ENCODE measurements at regions of chr16 and their contacts with region 1.

Region 1: DNA sequence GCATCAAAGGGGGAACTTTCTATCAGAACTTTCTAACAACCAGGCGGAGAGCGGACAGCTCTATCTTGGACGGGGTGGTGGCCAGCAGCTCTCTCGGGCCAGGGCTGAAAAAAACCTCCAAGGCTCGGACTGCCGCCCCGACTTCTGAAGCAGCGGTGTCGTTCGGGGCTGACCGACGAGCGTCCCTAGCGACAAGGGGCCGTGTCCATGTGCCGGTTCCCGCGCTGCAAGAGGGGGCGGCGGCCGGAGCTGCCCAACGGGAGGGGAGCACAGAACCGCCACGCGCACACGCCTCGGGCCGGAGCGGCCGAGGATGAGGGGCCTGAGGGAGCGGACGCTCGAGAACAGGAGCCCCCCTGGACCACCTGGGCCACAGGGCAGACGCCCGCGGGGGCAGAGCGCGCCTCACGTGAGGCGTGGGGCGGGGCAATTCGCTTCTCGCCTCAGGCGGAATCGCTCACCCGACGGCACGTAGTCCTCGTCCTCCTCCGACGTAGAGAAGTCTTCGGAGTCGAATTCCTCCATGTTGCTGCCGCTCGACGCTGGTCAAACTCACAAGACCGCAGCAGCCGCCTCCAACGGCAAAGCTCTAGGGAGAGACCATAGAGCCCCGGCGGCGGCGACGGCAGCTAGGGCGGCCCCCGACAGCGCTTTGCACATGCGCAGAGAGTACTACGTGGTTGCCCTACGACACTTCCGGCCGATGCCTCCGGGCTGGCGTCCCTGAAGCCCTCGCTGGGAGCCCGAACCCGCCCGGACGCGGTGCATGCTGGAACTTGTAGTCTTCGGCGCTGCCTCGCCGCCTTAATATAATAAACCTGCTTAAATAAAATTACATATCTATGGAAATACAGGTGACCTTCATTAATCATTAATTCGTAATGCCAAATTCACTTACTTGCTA is at the start of gene CFDP1:
- DNase-seq: peak; percentile 91
- ATAC-seq: peak; percentile 86
- H3K4me3 Mint-ChIP-seq: peak within 1 kb of the TSS; percentile 91
- H3K27ac Mint-ChIP-seq: peak within 1 kb of the TSS; percentile 88
- H3K4me1 Mint-ChIP-seq: peaks cover 19% of the 10 kb centered on the region
- H3K27me3 Mint-ChIP-seq: no peaks in the 10 kb centered on the region
- CTCF ChIP-seq: no peak
- total RNA-seq, gene CFDP1: 27.7 and 32.0 TPM in 2 replicates

Region 2: GRCh38 chr16:74606521-74607310 is 826.4 kb before region 1 on chr16 and contains the start of gene GLG1:
- CTCF ChIA-PET with region 1: no interaction called
- POLR2A ChIA-PET with region 1: no interaction called
- intact Hi-C with region 1: loop called (anchors 10 kb)
- DNase-seq: peak; percentile 94
- ATAC-seq: peak; percentile 96
- H3K4me3 Mint-ChIP-seq: peak within 1 kb of the TSS; percentile 94
- H3K27ac Mint-ChIP-seq: peak within 1 kb of the TSS; percentile 91
- H3K4me1 Mint-ChIP-seq: peaks cover 45% of the 10 kb centered on the region
- H3K27me3 Mint-ChIP-seq: no peaks in the 10 kb centered on the region
- CTCF ChIP-seq: no peak
- total RNA-seq, gene GLG1: 72.7 and 81.4 TPM in 2 replicates

Region 3: DNA sequence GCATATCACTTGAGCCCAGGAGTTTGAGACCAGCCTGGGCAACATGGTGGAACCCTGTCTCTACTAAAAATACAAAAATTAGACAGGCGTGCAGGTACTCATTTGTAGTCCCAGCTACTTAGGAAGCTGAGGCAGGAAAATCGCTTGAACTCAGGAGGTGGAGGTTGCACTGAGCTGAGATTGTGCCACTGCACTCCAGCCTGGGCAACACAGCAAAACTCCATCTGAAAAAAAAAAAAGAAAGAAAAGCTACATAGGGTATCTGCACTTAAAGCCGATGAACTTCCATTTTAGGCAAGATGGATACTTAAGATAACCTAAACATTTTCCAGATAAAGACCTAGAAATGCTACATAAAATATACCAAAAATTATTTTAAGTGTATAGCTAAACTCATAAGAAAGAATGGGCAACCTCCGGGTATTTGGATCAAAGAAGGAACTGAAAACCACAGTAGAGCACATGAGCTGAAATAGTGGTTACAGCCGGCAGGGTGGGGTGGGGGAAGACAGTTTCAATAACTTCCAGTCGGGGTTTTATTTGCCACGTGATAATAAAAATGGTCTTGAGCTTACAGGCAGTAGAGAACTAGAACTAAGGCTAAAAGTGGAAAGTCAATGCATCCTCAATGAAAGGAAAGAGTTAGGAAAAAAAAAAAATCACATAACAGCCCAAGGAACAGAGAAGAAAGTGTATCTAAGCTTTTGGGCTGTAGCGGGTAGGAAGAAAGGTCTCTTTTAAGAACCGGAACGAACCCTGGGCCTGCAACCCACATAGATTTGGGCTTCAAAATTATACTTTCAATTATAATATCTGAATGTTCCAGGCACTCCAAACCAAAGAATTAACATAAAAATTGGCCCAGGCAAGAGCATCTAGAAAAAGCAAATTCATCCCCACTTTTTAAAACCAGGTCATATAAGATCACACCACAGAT is 52.9 kb before region 1 on chr16:
- CTCF ChIA-PET with region 1: no interaction called
- POLR2A ChIA-PET with region 1: interaction called, 7 read pairs
- intact Hi-C with region 1: loop called (anchors 2 kb)
- DNase-seq: peak; percentile 37
- ATAC-seq: peak; percentile 97
- H3K4me3 Mint-ChIP-seq: peak overlapping the region; percentile 48
- H3K27ac Mint-ChIP-seq: no peak overlapping the region
- H3K4me1 Mint-ChIP-seq: peaks cover 28% of the 10 kb centered on the region
- H3K27me3 Mint-ChIP-seq: peaks cover 70% of the 10 kb centered on the region
- CTCF ChIP-seq: no peak

Region 4: DNA sequence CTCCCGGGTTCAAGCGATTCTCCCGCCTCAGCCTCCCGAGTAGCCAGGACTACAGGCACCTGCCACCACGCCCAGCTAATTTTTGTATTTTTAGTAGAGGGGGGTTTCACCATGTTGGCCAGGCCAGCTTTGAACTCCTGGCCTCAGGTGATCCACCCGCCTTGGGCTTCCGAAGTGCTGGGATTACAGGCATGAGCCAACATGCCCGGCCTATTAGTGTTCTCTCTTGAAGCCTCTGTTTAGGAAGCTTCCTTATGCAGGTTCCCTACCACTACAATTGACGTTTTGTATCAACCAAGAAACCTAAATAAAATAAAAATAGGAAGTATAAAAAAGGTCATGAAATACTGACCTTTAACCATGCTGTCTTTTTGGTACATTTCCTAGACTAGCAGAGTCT is 86.8 kb after region 1 on chr16:
- CTCF ChIA-PET with region 1: interaction called, 8 read pairs
- POLR2A ChIA-PET with region 1: interaction called, 6 read pairs
- intact Hi-C with region 1: loop called (anchors 1 kb)
- DNase-seq: no peak
- ATAC-seq: no peak
- H3K4me3 Mint-ChIP-seq: no peak overlapping the region
- H3K27ac Mint-ChIP-seq: no peak overlapping the region
- H3K4me1 Mint-ChIP-seq: peaks cover 13% of the 10 kb centered on the region
- H3K27me3 Mint-ChIP-seq: no peaks in the 10 kb centered on the region
- CTCF ChIP-seq: no peak

Region 5: DNA sequence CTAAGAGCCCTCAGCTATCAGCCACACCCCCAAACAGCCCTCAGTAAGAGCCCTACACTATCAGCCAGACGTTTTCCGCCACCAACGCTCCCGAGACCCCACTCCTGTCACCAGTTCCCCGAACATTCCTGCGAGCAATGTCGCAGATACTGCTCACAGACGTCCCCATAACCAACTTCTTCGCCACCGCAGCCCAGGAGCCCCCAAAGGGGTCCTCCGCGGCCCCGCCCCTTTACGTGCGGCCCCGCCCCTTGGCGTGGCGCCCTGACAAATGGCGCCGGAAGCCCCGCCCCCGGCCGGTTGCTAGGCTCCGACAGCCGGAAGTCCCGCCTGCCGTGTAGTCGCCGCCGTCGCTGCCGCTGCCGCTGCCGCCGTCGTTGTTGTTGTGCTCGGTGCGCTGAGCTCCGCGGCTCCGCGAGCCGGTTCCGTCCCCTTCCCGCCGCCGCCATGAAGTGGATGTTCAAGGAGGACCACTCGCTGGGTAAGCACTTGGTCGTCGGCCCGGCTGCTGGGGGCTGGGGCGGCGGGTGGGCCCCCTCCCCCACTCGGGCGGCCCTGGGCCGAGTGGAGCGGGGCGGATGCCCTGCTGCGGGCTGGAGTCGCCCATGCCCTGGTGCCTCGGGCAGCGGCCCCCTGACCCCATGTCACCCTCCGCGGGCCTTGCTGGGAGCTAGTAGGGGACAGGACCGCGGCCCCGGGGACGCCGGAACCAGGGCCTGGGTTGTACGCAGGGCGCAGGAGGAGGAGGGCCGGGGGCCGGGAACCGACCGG is 133.1 kb after region 1 on chr16 and contains the start of gene GABARAPL2:
- CTCF ChIA-PET with region 1: no interaction called
- POLR2A ChIA-PET with region 1: interaction called, 7 read pairs
- intact Hi-C with region 1: loop called (anchors 1 kb)
- DNase-seq: peak; percentile 98
- ATAC-seq: peak; percentile 69
- H3K4me3 Mint-ChIP-seq: peak within 1 kb of the TSS; percentile 100
- H3K27ac Mint-ChIP-seq: peak within 1 kb of the TSS; percentile 98
- H3K4me1 Mint-ChIP-seq: peaks cover 57% of the 10 kb centered on the region
- H3K27me3 Mint-ChIP-seq: no peaks in the 10 kb centered on the region
- CTCF ChIP-seq: no peak
- total RNA-seq, gene GABARAPL2: 62.9 and 69.4 TPM in 2 replicates